ENCODE measurements at regions of chr7 and their contacts with region 1.

Region 1: GRCh38 chr7:26365077-26365900 is 73.6 kb downstream of the SNX10 start:
- DNase-seq: peak in 3 of 4 donors; percentile 45 to 86 (median 68)
- ATAC-seq: peak; percentile 96
- H3K4me3 ChIP-seq: peak overlapping the region in 1 of 2 donors; percentile 11
- H3K27ac ChIP-seq: no peak overlapping the region
- H3K4me1 ChIP-seq: peaks cover 0 to 42% of the 10 kb centered on the region in 2 donors
- H3K27me3 ChIP-seq: peaks cover 0 to 15% of the 10 kb centered on the region in 2 donors
- CTCF ChIP-seq: peak; percentile 62 to 66

Region 2: DNA sequence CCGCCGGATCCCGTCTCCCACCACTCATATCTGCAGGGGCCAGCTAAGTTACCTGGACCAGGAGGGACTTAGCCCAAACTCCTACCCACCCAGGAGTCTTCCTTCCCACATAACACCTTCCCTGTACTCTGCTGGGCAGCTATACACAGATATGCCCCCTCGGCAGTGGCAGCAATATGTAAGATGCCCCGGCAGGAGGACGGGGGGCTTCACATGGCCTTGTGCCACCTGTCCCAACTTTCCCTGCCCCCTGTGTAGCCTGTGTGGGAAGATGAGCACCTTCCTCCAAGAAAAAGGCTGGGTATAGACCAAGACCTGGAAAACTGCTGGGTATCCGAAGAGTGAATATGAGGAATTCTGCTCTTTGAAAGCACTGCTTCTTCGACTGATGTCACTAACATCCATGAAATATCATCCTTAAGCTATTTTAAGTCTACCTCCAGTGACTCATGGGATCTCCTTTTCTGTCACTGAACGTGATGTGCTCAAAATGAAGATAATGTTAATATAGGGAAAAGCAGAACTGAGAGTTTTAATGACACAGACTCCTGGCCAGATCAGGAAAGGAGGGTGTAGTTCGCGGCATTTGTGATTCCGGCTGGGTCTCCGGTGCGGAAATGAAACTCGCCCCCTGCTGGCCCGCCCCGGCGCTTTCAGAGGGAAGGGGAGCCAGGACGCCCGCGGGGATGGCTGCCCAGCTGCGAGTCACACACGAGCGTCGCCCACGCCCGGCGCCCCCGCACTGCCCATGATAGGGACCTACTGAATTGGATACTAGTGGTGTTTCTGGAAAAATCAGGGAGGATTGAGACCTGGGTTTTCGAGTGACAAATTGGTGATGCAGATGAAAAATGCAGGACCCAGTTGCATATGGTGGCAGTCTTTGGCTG is 470.1 kb before region 1 on chr7:
- intact Hi-C with region 1: loop called in 1 of 2 experiments (anchors 5 kb)
- DNase-seq: peak; percentile 59 to 89 (median 67)
- ATAC-seq: peak; percentile 80
- H3K4me3 ChIP-seq: peak overlapping the region in 1 of 2 donors; percentile 9
- H3K27ac ChIP-seq: no peak overlapping the region
- H3K4me1 ChIP-seq: peaks cover 0 to 12% of the 10 kb centered on the region in 2 donors
- H3K27me3 ChIP-seq: peaks cover 0 to 40% of the 10 kb centered on the region in 2 donors
- CTCF ChIP-seq: peak; percentile 65 to 70

Region 3: GRCh38 chr7:26083113-26083512 is 282.2 kb before region 1 on chr7:
- intact Hi-C with region 1: loop called in 1 of 2 experiments (anchors 10 kb)
- DNase-seq: peak in 1 of 4 donors; percentile 15
- ATAC-seq: peak; percentile 32
- H3K4me3 ChIP-seq: no peak overlapping the region
- H3K27ac ChIP-seq: no peak overlapping the region
- H3K4me1 ChIP-seq: peaks cover 0 to 10% of the 10 kb centered on the region in 2 donors
- H3K27me3 ChIP-seq: peaks cover 10 to 24% of the 10 kb centered on the region in 2 donors
- CTCF ChIP-seq: no peak

Region 4: DNA sequence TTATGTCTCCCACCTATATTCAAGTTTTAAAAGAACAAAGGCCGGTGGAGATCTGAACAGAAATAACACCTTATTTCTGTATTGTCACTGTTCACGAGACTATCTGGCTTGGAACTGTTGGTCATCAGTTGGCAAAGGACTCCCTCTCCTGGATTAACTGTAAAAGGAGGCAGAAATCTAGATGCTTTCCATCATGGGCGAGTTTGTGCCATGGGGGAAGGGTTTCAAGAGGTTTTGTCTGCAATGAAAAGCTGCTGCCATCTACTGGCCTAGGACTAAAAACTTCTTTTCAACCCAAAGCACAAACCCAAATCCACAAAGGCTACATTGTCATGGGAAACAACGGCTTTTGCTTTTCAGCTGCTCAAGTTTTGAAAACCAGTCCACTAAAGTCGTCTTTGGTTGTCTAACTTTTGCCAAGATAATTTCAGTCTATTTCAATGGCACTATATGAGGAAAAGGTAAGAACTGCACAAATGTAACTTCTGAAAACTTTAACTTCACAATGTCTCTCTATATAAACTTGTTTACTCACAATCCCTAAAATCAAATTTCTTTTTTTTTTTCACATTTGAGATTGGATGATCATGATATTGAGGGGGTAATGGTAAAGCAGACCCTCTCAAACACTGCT is 302.3 kb after region 1 on chr7:
- intact Hi-C with region 1: loop called in 1 of 2 experiments (anchors 5 kb)
- DNase-seq: peak in 3 of 4 donors; percentile 55 to 95 (median 87)
- ATAC-seq: peak; percentile 94
- H3K4me3 ChIP-seq: no peak overlapping the region
- H3K27ac ChIP-seq: no peak overlapping the region
- H3K4me1 ChIP-seq: peaks cover 0 to 13% of the 10 kb centered on the region in 2 donors
- H3K27me3 ChIP-seq: no peaks in the 10 kb centered on the region
- CTCF ChIP-seq: peak; percentile 57 to 61

Region 5: GRCh38 chr7:27160546-27161213 is 795.4 kb after region 1 on chr7:
- intact Hi-C with region 1: loop called in 1 of 2 experiments (anchors 5 kb)
- DNase-seq: peak in 3 of 4 donors; percentile 87 to 96 (median 92)
- ATAC-seq: peak; percentile 92
- H3K4me3 ChIP-seq: peak overlapping the region; percentile 56
- H3K27ac ChIP-seq: peak overlapping the region in 1 of 2 donors; percentile 45
- H3K4me1 ChIP-seq: peaks cover 9 to 56% of the 10 kb centered on the region in 2 donors
- H3K27me3 ChIP-seq: peaks cover 76 to 100% of the 10 kb centered on the region in 2 donors
- CTCF ChIP-seq: peak; percentile 100